Right ventricle myocardium inferior (tissue), 1 donor: ENCODE measurements at regions of chr14 and their contacts with region 1.

Region 1: DNA sequence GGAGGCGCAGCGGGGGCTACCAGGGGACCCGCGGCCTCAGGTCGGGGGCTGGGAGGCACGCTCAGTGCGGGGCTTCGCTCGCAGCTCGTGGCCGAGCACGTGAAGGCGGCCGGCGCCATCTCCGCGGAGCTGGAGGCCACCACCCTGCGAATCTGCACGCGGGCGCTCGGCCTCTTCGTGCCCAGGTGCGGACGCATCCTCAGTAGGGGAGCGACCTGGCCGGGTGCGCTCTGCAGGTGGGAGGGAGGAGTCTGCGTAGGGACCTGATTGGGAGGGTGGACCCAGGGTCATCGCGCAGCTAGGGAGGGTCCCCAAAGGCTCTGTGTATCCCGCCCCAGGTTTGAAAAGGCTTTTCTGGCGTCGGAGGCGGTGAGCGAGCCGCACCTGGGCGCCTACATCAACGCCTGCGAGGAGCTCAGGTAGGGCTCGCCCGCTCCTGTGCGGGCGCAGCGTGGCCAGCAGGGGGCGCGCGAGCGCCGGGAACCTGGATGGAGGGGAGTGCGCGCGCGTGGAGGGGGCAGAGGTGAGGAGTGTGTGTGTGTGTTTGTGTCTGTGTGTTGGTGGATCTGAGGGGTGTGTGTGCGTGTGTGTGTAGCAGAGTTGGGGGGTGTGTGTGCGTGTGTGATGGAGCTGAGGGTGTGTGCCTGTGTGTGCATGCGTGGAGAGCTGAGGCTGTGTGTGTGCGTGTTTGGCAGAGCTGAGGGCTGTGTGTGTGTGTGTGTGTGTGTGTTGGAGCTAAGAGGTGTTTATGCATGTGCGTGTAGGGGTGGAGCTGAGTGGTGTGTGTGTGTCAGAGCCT is 10.3 kb downstream of the EXOC3L4 start:
- DNase-seq: peak; percentile 92
- ATAC-seq: peak; percentile 82

Region 2: GRCh38 chr14:102675396-102675795 is 429.5 kb before region 1 on chr14:
- intact Hi-C with region 1: no loop called
- DNase-seq: no peak
- ATAC-seq: no peak

Region 3: GRCh38 chr14:103121846-103122584 is 17.2 kb after region 1 on chr14:
- intact Hi-C with region 1: loop called (anchors 2 kb)
- DNase-seq: peak; percentile 96
- ATAC-seq: peak; percentile 73

Region 4: GRCh38 chr14:103141119-103141796 is 36.4 kb after region 1 on chr14:
- intact Hi-C with region 1: loop called (anchors 5 kb)
- DNase-seq: no peak
- ATAC-seq: no peak

Region 5: GRCh38 chr14:103185051-103185992 is 80.5 kb after region 1 on chr14:
- intact Hi-C with region 1: loop called (anchors 5 kb)
- DNase-seq: no peak
- ATAC-seq: no peak

Region 6: GRCh38 chr14:103292426-103293374 is 187.8 kb after region 1 on chr14:
- intact Hi-C with region 1: loop called (anchors 1 kb)
- DNase-seq: peak; percentile 77
- ATAC-seq: peak; percentile 89